Right ventricle myocardium inferior (tissue), 1 donor: ENCODE measurements at regions of chr2 and their contacts with region 1.

Region 1: DNA sequence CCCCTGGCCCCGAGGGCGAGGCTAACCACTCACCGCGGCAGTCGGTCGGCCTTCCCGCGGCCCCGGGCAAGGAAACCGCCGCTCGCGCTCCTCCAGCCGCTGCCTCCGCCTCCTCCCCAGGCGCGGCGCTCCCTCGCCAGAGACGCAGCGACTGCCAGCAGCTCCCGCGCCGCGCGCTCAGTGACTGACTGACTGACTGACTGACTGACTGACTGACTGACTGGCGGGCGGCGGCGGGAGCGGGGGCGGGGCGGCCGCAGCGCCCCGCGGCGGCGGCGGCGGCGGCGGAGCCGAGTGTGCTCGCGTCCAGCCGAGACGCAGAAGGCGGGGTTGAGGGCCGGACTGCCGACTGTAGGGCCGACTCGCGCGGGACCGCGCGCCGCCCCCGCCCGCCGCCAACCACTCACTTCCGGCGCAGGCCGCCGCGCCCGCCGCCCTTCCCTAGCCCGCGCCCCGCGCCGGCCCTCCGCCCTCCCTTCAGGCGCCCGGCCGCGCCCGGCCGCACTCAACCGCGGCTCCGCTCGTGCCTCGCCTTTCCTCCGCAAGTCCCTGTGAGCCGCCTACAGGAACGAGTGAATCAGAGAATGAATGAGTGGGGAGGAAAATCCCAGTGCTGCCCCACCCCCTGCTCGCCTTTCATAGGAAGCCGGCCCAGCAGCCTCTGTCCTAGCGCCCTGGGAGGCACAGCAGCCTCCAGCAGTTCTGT is at the start of gene RAPH1:
- DNase-seq: peak; percentile 94
- ATAC-seq: peak; percentile 94
- total RNA-seq, gene RAPH1: 15.1 TPM

Region 2: DNA sequence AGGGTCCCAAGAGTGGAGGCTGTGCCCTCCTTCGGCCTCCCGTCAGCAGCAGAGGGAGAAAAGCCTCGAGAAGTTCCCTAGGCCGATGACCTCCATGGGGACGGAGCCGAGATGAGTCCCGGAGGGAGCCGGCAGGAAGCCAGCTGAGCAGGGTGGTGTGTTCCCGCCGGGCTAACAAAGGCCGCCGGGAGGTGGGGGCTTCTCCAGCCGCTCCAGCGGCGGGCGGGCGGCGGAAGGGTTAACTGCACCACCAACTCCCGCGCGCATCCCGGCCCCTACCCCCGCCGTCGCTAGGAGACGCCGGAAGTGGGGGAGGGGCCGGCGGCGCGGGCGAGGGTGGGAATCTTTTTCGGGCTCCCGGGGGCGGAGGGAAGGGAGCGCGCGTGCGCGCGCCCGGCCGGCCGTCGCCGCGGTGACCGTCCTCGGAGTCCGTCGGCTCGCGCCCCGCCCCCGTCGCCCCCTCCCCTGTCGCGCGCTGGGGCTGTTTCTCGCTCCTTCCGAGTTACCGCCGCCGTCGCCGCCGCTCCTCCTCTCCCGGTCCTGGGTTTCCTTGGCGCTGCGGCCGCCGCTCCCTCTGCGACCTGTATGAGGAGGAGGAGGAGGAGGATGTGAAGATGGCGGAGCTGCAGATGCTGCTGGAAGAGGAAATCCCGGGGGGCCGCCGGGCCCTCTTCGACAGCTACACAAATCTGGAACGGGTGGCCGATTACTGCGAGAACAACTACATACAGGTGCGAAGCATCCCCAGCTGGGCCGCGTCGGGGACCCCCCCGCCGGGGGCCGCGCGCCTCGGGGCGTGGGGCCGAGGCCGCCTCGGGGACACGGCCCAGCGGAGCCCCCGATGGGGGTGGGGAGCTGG is 207.1 kb before region 1 on chr2 and contains the start of gene ABI2:
- intact Hi-C with region 1: loop called (anchors 5 kb)
- DNase-seq: peak; percentile 89
- ATAC-seq: peak; percentile 95
- total RNA-seq, gene ABI2: 43.5 TPM

Region 3: DNA sequence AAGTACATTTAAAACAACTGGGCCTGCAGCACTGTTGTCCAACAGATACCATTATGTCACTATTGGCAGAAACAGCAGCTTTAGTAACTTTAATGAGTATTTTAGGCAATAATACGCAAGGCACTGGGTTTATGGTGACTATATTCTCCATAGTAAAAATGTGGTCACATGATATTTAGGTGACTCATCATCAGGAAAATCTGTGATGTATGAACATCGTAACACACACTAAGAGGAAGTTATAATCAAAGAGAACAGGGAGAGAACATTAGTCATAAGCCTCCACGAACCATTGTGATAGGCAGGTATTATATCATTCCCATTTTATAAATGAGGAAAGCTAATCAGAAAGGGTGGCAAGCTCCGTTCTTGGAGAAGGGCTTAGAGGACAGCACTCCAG is 37.1 kb before region 1 on chr2:
- intact Hi-C with region 1: no loop called
- DNase-seq: no peak
- ATAC-seq: peak; percentile 28

Region 4: GRCh38 chr2:203650860-203651613 is 115.8 kb after region 1 on chr2:
- intact Hi-C with region 1: loop called (anchors 10 kb)
- DNase-seq: no peak
- ATAC-seq: peak; percentile 74

Region 5: DNA sequence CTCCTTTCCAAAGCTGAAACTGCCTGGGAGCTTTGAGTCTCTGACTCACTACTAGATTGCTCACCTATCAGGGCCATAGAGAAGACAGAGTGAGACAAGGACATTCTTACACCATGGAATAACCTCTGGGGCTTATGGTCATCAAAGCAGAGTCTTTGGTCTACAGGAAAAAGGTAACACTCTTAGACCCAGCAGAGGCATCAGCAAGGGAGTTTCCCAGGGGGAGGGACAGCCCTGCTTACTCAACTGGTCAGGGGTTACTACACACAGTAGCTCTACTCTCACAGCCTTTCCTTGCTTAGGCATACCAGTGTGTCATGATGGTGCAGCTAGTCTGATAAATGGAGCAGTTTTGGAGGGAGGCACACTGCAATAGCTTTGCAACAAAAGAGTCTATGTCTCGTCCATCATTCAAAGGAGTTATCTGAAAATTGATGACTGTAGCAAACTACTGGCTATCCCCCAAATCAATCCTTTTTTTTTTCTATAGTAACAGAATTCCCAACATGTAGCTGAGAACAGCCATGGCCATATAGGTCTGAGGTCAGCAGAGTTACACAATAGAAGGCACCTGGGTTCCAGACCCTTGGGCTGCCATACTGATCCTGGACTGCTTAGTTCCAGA is 148.8 kb after region 1 on chr2:
- intact Hi-C with region 1: loop called (anchors 2 kb)
- DNase-seq: no peak
- ATAC-seq: no peak

Region 6: DNA sequence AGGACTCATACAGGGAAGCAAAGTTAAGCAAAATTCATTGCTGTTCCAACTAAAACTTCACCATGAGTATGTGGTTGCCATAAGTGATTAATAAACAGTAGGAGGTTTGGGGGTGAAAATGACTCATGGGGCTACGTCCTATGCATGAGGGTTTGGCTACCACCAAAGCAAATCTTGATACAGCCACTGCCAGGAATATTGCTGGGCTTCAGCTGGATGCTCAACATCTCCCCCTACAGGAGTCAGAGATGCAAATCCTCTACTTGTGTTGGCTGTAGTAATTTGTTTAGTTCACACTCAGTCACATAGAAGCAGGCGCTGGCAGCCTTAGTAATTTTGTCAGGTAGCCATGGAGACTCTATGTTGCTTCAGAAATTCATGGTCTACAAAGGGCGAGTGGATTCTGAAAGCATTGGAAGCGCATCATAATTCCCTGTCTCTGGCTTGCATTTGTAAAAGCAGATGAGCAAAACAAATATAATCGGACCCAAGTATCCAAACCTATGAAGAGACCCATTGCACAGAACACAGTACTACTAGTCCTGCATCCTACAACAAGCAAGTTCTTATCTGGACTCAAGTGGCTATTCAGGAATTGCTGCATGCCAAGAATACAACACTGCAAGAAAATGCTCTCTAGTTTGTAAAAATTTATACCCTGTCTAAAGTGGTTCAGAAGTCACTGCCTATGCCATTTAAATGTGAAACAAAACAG is 247.2 kb after region 1 on chr2:
- intact Hi-C with region 1: loop called (anchors 5 kb)
- DNase-seq: no peak
- ATAC-seq: peak; percentile 54